ENCODE measurements at regions of chr3 and their contacts with region 1.

Region 1: DNA sequence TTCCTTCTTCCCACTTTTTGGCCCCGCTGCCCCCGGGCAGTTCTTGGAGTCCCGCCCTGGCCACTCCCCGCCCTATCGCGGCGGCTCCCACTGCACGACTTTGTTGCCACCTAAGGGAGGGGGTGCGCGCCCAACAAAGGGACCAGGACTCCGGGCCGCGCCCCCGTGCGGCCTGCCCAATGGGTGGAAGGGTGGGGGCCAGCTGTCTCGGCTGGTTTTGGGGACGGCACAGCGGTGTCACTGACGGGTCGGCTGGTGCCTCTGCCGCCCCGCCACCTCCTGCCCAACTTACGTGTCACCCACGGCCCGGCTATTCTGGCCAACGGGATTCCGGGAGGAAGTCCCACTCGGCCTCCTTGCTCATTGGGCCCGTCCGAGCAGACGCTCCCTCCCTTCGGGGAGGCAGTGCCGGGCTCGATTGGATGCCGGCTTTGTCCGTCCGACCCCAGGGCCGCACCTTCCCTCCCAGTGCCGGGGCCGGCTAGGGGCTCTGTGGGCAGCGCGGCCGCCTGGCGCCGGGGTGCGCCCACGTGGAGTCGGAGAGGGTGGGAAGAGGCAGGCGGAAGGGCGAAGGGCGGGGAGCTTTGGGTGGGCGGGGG is at the start of gene GOLIM4:
- DNase-seq: peak; percentile 62 to 81
- ATAC-seq: peak; percentile 79 to 90 (median 80)
- H3K4me3 ChIP-seq: peak within 1 kb of the TSS; percentile 82
- H3K4me3 Mint-ChIP-seq: peak within 1 kb of the TSS; percentile 95
- H3K27ac ChIP-seq: peak within 1 kb of the TSS; percentile 85
- H3K27ac Mint-ChIP-seq: peak within 1 kb of the TSS; percentile 79 to 96
- H3K4me1 ChIP-seq: peaks cover 11% of the 10 kb centered on the region
- H3K4me1 Mint-ChIP-seq: peaks cover 22 to 29% of the 10 kb centered on the region in 2 donors
- H3K27me3 ChIP-seq: no peaks in the 10 kb centered on the region
- H3K27me3 Mint-ChIP-seq: peaks cover 0 to under 1% of the 10 kb centered on the region in 2 donors
- CTCF ChIP-seq: no peak
- total RNA-seq, gene GOLIM4: 13.7 to 17.9 (median 17.9) TPM

Region 2: DNA sequence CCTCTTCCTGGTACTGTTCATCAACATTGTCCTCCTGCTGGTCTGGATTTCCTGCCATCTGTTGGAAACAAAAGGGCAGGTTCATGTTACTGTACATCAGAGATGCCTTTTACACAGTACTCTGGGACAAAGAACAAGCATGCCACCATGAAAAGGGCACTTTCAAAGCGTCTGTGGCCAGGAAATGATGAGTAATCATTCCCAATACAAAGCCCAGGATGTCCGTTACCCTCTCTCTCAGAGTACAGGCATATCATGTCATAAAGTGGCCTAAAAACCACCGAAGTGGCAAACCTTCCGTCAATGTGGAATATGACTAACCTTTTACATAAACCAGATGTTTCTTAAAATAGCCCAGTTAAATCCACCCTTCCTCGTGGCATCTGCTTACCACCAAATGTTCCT is 71.2 kb before region 1 on chr3:
- intact Hi-C with region 1: no loop called
- DNase-seq: no peak
- ATAC-seq: peak; percentile 43 to 77 (median 45)
- H3K4me3 ChIP-seq: no peak overlapping the region
- H3K4me3 Mint-ChIP-seq: peak overlapping the region; percentile 10
- H3K27ac ChIP-seq: no peak overlapping the region
- H3K27ac Mint-ChIP-seq: peak overlapping the region; percentile 39 to 56
- H3K4me1 ChIP-seq: peaks cover 3% of the 10 kb centered on the region
- H3K4me1 Mint-ChIP-seq: peaks cover 17 to 25% of the 10 kb centered on the region in 2 donors
- H3K27me3 ChIP-seq: no peaks in the 10 kb centered on the region
- H3K27me3 Mint-ChIP-seq: no peaks in the 10 kb centered on the region
- CTCF ChIP-seq: no peak

Region 3: DNA sequence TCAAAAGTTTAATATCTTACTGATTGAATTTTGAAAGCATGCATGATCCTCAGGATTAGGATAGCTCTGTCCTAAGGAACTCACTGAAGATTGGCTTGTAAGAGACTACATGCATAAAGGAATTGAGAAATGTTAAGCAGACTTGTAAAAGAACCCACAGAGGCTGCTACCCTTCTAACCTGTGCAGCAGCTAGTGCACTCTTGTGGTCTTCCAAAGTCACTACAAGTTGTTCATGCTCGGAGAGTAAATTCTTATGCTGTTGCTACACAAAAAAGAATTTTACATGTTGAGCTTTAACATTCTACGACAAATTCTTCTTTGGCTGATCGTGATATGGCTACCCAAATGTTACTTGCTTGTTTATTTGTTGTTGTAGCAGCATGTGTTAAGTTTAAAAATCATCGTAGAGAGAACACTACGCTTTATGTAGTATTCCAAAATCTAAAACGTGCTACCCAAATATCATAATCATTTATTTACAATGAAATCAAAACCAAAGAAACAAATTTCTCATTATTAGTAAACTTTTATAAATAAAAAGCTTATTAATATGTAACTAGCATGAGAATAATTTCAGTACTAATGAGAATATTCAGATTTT is 55.0 kb before region 1 on chr3:
- intact Hi-C with region 1: no loop called
- DNase-seq: peak in 1 of 2 donors; percentile 5
- ATAC-seq: no peak
- H3K4me3 ChIP-seq: no peak overlapping the region
- H3K4me3 Mint-ChIP-seq: no peak overlapping the region
- H3K27ac ChIP-seq: no peak overlapping the region
- H3K27ac Mint-ChIP-seq: no peak overlapping the region
- H3K4me1 ChIP-seq: no peaks in the 10 kb centered on the region
- H3K4me1 Mint-ChIP-seq: no peaks in the 10 kb centered on the region
- H3K27me3 ChIP-seq: no peaks in the 10 kb centered on the region
- H3K27me3 Mint-ChIP-seq: no peaks in the 10 kb centered on the region
- CTCF ChIP-seq: no peak

Region 4: GRCh38 chr3:168165390-168166269 is 69.9 kb after region 1 on chr3:
- intact Hi-C with region 1: loop called (anchors 5 kb)
- DNase-seq: peak in 1 of 2 donors; percentile 63
- ATAC-seq: peak in 2 of 3 donors; percentile 54 to 66
- H3K4me3 ChIP-seq: peak overlapping the region; percentile 19
- H3K4me3 Mint-ChIP-seq: peak overlapping the region; percentile 52
- H3K27ac ChIP-seq: no peak overlapping the region
- H3K27ac Mint-ChIP-seq: no peak overlapping the region
- H3K4me1 ChIP-seq: no peaks in the 10 kb centered on the region
- H3K4me1 Mint-ChIP-seq: peaks cover 12 to 18% of the 10 kb centered on the region in 2 donors
- H3K27me3 ChIP-seq: no peaks in the 10 kb centered on the region
- H3K27me3 Mint-ChIP-seq: peaks cover 0 to 4% of the 10 kb centered on the region in 2 donors
- CTCF ChIP-seq: peak; percentile 66

Measured in natural killer cell (primary cell).